ENCODE measurements at regions of chr10 and their contacts with region 1.

Region 1: GRCh38 chr10:124647421-124648130 is 96.6 kb downstream of the FAM53B start:
- DNase-seq: peak; percentile 94

Region 2: DNA sequence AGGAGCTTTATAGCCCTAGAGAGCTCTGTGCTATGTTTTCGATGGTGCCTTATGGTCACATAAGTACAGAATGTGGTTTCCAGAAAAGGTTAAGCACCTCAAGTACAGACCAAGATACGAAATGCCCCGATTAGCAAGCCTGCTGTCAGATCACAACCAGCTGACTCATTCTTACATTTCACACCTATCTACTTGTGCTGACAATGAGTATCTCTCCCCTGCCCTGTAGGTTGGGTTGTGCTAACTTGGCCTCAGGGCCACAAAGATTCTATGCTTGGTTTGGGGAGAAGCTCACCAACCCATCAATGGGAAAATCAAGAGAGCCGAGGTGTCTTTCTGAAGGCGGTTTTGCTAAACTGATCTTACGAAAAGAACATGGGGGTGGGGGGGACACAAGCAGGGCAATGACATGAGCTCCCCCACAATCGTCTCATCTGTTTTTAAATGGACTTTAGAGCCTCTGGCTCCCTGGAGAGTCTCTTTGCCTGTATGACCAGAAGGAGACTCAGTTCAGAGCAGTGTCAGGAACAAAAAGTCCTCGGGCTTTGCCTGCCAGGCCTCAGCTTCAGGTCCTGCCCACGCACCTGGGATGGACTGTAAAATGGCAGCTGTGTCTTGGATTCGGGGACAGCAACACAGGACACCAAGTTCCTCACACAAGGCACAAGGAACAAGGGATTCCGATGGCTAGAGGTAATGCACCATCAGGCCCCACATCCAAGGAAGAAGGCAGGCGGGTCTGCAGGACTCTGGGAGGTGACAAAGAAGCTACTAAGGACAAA is 41.5 kb after region 1 on chr10:
- intact Hi-C with region 1: loop called (anchors 5 kb)
- DNase-seq: no peak

Region 3: DNA sequence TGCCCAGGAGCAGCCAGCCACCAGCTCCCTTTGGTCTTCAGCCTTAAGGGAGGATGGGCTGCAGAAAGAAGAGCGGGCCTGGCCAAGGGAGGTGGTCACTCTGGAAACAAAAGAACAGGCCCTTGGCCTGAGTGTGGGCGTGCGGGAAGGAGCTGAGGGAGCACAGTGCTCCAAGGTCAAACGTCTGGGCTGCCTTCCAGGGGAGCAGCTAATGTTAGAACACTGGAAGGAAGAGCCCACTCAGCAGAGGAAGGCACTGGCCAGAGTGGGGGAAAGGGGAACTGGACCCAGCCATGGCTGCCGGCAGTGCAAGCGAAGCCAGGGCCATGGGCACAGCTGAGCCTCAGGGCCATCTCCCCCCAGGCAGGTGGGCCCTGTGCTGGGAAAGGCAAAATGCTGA is 53.9 kb after region 1 on chr10:
- intact Hi-C with region 1: loop called (anchors 5 kb)
- DNase-seq: peak; percentile 96

Region 4: DNA sequence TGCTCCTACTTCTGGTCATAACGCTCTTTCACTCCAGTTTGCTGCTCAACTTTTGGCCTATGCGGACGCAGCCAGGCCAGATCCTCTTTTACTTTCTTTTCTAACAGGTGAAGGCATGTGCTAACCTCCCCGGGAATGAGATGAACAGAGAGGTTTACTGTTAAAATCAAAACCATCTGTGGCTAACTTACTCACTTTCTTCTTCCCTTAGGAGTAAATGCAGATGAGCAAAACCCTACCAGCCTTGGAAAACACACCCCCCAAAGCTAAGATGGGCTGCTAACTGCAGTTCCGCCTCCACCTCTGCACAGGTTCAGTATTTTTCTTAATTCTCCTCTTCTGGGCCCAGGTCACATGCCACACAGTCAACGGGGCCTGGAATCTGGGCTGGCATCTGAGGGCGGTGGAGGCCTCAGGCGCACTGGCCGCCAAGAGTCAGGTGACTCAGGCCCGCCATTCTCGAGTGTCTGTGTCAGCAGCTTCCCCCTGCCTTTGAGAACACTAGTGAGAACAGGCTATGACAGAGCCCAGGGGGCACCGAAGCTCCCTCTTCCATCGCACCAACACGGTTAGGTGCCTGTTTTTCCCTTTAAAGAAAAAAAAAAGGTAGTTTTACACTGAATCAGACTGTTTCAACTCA is 85.5 kb after region 1 on chr10:
- intact Hi-C with region 1: loop called (anchors 5 kb)
- DNase-seq: no peak

Measured in cardiac septum (tissue), 1 donor.